OCI-LY7 (cell line): ENCODE measurements at regions of chr12 and their contacts with region 1.

Region 1: GRCh38 chr12:6873094-6874014 is at the start of gene SPSB2:
- DNase-seq: peak; percentile 100
- H3K4me3 ChIP-seq: peak within 1 kb of the TSS; percentile 77
- H3K27ac ChIP-seq: peak within 1 kb of the TSS; percentile 68
- H3K4me1 ChIP-seq: peaks cover 47% of the 10 kb centered on the region
- CTCF ChIP-seq: no peak
- total RNA-seq, gene SPSB2: 7.8 and 8.3 TPM in 2 replicates

Region 2: GRCh38 chr12:6363611-6364328 is 509.6 kb before region 1 on chr12:
- CTCF ChIA-PET with region 1: no interaction called
- POLR2A ChIA-PET with region 1: no interaction called
- intact Hi-C with region 1: no loop called
- DNase-seq: no peak
- H3K4me3 ChIP-seq: peak overlapping the region; percentile 66
- H3K27ac ChIP-seq: no peak overlapping the region
- H3K4me1 ChIP-seq: peaks cover 66% of the 10 kb centered on the region
- CTCF ChIP-seq: no peak

Region 3: DNA sequence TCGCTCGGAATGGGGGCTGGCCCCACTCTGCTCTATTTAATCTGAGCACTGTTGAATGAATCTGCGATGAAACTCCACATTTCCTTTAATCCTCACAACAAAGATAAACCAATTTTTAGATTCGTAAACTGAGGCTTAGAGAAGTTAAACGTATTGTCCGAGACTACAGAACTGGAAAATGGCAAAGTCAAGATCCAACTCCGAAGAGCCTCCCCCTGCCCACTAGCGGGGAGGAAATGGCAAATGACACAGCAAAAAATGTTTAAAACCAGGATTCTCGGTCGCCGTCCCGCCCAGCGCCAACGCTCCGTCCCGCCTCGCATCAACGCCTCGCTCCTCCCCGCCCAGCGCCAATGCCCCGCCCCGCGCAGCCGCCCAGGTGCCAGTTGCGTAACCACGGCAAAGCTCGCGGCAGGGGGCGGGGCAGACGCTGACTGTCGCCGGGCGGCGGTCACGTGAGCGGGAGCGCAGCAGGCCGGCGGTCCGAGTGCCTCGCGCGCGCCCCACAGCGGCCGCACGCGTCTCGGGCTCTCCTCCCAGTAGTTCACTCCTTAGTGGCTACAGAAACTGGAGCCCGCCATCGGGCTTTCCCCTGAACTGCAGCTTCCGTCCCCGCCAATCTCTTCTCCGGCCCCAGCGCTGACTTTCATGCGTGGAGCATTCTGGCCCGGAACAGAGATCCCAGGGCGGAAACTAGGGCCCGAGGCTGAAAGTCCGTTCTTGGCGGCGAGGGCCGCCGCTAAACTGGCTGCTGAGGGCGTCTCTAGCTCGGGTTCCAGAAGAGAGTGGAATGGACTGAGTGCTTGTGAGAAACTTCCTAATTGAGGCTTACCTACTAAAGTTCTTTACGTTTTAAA is 17.7 kb after region 1 on chr12:
- CTCF ChIA-PET with region 1: interaction called, 17 read pairs
- POLR2A ChIA-PET with region 1: interaction called, 17 read pairs
- intact Hi-C with region 1: loop called (anchors 1 kb)
- DNase-seq: peak; percentile 98
- H3K4me3 ChIP-seq: peak overlapping the region; percentile 66
- H3K27ac ChIP-seq: peak overlapping the region; percentile 81
- H3K4me1 ChIP-seq: peaks cover 28% of the 10 kb centered on the region
- CTCF ChIP-seq: peak; percentile 82

Region 4: DNA sequence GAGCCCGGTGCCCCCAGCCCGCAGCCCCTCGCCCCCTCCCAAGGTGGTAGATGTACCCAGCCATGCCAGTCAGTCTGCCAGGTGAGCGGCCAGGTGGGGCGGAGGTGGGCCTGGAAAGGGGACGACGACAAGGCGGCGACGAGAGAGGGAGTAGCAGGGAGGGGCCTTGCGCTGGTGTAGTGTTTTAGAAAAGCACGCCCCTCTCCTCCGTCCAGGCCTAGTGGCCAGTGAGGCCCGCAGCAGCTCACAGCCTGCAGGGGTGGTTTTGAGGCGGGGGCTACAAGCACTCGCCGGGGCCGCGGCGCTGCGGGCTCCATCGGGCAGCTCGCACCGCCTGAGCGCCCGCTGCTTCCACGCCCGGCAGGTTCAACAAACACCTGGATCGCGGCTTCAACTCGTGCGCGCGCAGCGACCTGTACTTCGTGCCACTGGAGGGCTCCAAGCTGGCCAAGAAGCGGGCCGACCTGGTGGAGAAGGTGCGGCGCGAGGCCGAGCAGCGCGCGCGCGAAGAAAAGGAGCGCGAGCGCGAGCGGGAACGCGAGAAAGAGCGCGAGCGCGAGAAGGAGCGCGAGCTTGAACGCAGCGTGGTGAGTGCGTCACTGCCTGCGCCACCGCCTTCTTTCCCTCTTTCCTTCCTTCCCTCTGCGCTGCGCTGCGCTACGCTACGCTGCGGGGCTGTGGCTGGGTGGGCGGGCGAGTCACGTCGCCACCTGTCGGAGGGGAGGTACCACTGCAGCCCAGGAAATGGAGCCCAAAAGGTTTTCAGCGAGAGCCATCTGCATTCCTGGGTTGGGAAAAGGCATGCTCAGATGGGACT is 64.3 kb after region 1 on chr12:
- CTCF ChIA-PET with region 1: interaction called, 5 read pairs
- POLR2A ChIA-PET with region 1: no interaction called
- intact Hi-C with region 1: loop called (anchors 2 kb)
- DNase-seq: peak; percentile 98
- H3K4me3 ChIP-seq: peak overlapping the region; percentile 81
- H3K27ac ChIP-seq: peak overlapping the region; percentile 87
- H3K4me1 ChIP-seq: peaks cover 15% of the 10 kb centered on the region
- CTCF ChIP-seq: peak; percentile 93

Region 5: DNA sequence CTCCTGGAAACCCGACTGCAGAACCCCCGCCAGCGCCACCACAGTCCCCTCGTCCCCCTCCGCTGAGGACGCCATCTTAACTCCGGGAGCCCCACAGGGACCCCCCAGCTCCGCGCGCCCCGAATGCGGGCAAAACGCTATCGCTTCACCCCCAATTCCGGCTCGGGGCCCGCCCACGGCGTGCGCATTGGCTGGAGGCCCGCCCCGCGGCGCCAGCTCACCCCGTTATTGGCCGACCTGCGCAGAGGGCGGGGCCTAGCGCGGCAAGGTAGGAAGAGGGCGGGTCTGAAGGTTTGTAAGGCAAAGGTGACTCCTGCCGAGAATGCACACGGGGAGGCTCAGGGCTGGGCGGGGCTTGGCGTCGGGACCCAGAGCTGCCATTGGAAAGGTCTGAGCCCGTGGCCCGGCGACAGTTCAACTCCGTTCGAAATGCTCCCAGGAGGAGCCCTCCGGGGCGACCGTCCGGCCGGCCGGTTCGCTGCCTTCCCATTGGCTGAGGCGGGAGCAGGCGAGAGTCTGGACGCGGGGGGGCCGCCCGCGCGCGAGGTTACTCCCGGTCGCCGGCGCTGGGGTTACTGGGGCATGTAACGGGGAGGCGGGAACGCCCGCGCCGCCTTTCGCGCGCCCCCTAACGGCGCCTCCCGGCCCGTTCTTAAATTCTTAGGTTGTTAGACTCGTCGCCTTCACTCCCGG is 145.1 kb after region 1 on chr12 and contains the start of gene LPCAT3:
- CTCF ChIA-PET with region 1: no interaction called
- POLR2A ChIA-PET with region 1: interaction called, 4 read pairs
- intact Hi-C with region 1: loop called (anchors 2 kb)
- DNase-seq: peak; percentile 97
- H3K4me3 ChIP-seq: peak within 1 kb of the TSS; percentile 82
- H3K27ac ChIP-seq: peak within 1 kb of the TSS; percentile 78
- H3K4me1 ChIP-seq: peaks cover 26% of the 10 kb centered on the region
- CTCF ChIP-seq: peak; percentile 83
- total RNA-seq, gene LPCAT3: 11.6 and 17.4 TPM in 2 replicates

Region 6: GRCh38 chr12:7189398-7190267 is 316.3 kb after region 1 on chr12 and contains the start of gene PEX5:
- CTCF ChIA-PET with region 1: no interaction called
- POLR2A ChIA-PET with region 1: no interaction called
- intact Hi-C with region 1: loop called (anchors 5 kb)
- DNase-seq: peak; percentile 98
- H3K4me3 ChIP-seq: peak within 1 kb of the TSS; percentile 85
- H3K27ac ChIP-seq: peak within 1 kb of the TSS; percentile 72
- H3K4me1 ChIP-seq: peaks cover 26% of the 10 kb centered on the region
- CTCF ChIP-seq: no peak
- total RNA-seq, gene PEX5: 45.6 and 54.4 TPM in 2 replicates